Psoas muscle (tissue), 8 donors: ENCODE measurements at regions of chr10 and their contacts with region 1.

Region 1: GRCh38 chr10:96840841-96841518 is 8.9 kb downstream of the LCOR start:
- DNase-seq: no peak
- ATAC-seq: peak in 3 of 4 donors; percentile 57 to 68 (median 57)
- H3K4me3 ChIP-seq: no peak overlapping the region
- H3K27ac ChIP-seq: no peak overlapping the region
- H3K4me1 ChIP-seq: peaks cover 58% of the 10 kb centered on the region
- H3K27me3 ChIP-seq: no peaks in the 10 kb centered on the region
- CTCF ChIP-seq: no peak

Region 2: DNA sequence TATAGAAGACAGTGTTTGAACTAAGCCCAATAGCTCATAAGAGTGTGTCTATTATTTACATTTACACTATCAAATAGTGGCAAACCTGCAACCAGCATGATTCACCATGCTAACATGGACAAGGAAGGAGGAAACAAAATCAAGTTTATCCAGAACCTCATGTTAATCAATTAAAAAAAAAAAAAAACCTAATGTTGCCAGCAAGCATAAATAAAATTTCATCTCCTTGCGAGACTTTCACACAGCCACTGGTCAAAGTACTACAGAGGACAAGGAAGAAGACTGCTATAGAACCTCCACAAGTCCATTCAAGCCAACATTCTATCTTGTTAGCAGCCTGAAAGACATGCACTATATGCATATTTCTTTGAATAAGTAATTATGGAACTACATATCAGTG is 263.9 kb before region 1 on chr10:
- intact Hi-C with region 1: no loop called
- DNase-seq: no peak
- ATAC-seq: no peak
- H3K4me3 ChIP-seq: no peak overlapping the region
- H3K27ac ChIP-seq: no peak overlapping the region
- H3K4me1 ChIP-seq: peaks cover 59% of the 10 kb centered on the region
- H3K27me3 ChIP-seq: no peaks in the 10 kb centered on the region
- CTCF ChIP-seq: no peak

Region 3: GRCh38 chr10:96651998-96652431 is 189.0 kb before region 1 on chr10:
- intact Hi-C with region 1: no loop called
- DNase-seq: no peak
- ATAC-seq: no peak
- H3K4me3 ChIP-seq: no peak overlapping the region
- H3K27ac ChIP-seq: no peak overlapping the region
- H3K4me1 ChIP-seq: no peaks in the 10 kb centered on the region
- H3K27me3 ChIP-seq: no peaks in the 10 kb centered on the region
- CTCF ChIP-seq: no peak

Region 4: DNA sequence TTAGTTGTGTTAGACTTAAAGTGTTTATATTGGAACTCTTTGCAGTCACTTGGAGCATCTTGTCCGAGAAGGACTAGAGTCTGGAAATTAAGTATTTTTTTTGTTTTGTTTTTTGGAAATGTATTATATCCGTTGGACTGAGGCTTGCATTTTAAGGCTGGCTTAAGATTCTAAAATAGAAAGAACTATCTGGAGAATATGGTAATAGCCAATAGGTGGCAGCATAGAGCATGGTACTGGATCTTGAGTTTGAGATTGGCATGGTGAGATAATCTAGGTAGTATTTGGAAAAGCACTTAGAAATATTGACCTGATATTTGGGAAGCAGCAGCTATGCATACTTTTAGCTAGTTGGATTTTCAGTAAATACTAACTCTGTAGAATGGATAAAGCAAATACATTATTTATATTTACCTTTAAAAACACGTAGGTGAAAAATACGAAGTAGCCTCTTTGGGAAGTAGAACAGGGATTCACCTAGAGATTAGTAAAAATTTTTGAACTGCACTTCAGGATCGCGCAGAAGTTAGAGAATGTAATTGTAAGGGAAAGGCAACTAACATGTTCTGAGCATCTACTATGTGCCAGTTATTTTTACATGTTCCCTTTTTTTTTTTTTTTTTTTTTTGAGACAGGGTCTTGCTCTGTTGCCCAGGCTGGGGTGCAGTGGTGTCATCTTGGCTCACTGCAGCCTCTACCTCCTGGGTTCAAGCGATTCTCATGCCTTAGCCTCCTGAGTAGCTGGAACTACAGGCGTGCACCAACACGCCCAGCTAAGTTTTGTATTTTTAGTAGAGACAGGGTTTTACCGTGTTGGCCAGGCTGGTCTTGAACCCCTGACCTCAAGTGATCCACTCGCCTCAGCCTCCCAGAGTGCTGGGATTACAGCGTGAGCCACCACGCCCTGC is 69.8 kb after region 1 on chr10:
- intact Hi-C with region 1: loop called (anchors 5 kb)
- DNase-seq: no peak
- ATAC-seq: peak; percentile 65 to 86 (median 82)
- H3K4me3 ChIP-seq: no peak overlapping the region
- H3K27ac ChIP-seq: peak overlapping the region; percentile 33
- H3K4me1 ChIP-seq: peaks cover 43% of the 10 kb centered on the region
- H3K27me3 ChIP-seq: no peaks in the 10 kb centered on the region
- CTCF ChIP-seq: peak; percentile 69